Esophagus squamous epithelium (tissue), 5 donors: ENCODE measurements at regions of chr1 and their contacts with region 1.

Region 1: GRCh38 chr1:44002606-44003157 is 11.3 kb downstream of the CCDC24 start:
- DNase-seq: no peak
- H3K4me3 ChIP-seq: no peak overlapping the region
- H3K27ac ChIP-seq: no peak overlapping the region
- H3K4me1 ChIP-seq: peaks cover 0 to 14% (median 4%) of the 10 kb centered on the region in 3 donors
- H3K27me3 ChIP-seq: no peaks in the 10 kb centered on the region
- CTCF ChIP-seq: peak in 1 of 6 experiments; percentile 8
- POLR2A ChIP-seq: no peak

Region 2: GRCh38 chr1:44036409-44037139 is 33.9 kb after region 1 on chr1:
- intact Hi-C with region 1: loop called (anchors 5 kb)
- DNase-seq: no peak
- H3K4me3 ChIP-seq: no peak overlapping the region
- H3K27ac ChIP-seq: peak overlapping the region; percentile 26 to 71 (median 62)
- H3K4me1 ChIP-seq: peaks cover 8 to 57% (median 33%) of the 10 kb centered on the region in 3 donors
- H3K27me3 ChIP-seq: no peaks in the 10 kb centered on the region
- CTCF ChIP-seq: peak; percentile 73 to 93 (median 86)
- POLR2A ChIP-seq: no peak